ENCODE measurements at regions of chr22 and their contacts with region 1.

Region 1: GRCh38 chr22:38569972-38570778 is at the start of gene DMC1:
- DNase-seq: peak; percentile 69
- ATAC-seq: peak; percentile 94
- H3K4me3 ChIP-seq: peak within 1 kb of the TSS; percentile 99
- H3K27ac ChIP-seq: peak within 1 kb of the TSS; percentile 73; the same call in 1 of the 2 replicates
- H3K4me1 ChIP-seq: no peaks in the 10 kb centered on the region; the same call in 1 of the 2 replicates
- H3K27me3 ChIP-seq: 0 out of 2 replicates have a peak, but pooled peaks cover 2% of the 10 kb centered on the region
- CTCF ChIP-seq: no peak
- POLR2A ChIP-seq: no peak
- RAD21 ChIP-seq: no peak
- total RNA-seq, gene DMC1: 0.18 and 1.1 TPM in 2 replicates

Region 2: DNA sequence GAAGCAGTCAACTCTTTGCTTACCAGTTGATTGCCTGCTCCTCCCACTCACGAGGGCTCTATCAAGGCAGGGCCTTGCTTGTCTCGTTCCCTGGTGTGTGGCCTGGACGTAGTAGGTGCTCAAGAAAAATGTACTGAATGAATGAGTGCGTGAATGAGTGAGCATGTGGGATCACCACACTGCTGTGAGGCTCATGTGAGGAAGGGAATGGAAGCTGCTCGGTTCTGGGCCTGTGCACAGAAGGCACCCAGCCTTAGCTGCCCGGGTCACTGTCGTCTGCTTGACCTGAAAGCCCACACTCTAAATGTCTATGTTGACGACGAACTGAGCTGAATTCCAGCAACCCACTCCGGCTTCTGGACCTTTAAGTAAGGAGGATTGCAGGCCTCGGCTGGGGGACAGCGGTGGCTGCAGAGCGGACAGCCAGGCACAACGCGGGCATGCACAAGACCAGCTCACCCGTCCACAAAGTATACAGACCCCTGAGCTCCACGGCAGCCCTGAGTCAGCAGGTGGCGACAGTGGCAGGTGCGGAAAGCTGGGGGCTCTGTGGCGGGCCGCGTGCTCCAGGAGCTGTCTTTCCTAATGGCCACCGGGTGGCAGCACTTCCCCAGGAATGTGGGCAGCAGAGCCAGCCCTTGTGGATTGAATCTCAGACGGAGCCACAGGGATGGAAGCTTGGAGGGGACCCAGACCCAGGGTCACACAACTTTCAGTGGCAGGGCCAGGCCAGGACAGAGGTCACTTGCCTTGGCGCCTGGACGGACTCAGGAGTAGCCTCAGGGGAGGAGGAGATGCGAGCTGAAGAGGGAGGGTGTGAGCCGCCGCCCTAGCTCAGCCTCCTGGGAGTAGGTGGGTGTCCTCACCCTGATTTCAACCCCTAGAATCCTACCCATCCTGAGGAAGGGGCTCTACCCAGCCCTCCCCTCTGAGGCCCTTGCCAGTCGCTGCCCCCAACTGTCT is 518.0 kb before region 1 on chr22:
- CTCF ChIA-PET with region 1: interaction called, 7 read pairs
- POLR2A ChIA-PET with region 1: no interaction called
- dilution Hi-C with region 1: no loop called
- in situ Hi-C with region 1: loop called (anchors 10 kb)
- intact Hi-C with region 1: loop called (anchors 1 kb)
- DNase-seq: peak; percentile 65
- ATAC-seq: peak; percentile 83
- H3K4me3 ChIP-seq: no peak overlapping the region
- H3K27ac ChIP-seq: no peak overlapping the region
- H3K4me1 ChIP-seq: peaks cover 3% of the 10 kb centered on the region; the same call in 1 of the 2 replicates
- H3K27me3 ChIP-seq: peaks cover 5% of the 10 kb centered on the region; the same call in 1 of the 2 replicates
- CTCF ChIP-seq: peak; percentile 85
- POLR2A ChIP-seq: no peak
- RAD21 ChIP-seq: peak; percentile 89

Region 3: DNA sequence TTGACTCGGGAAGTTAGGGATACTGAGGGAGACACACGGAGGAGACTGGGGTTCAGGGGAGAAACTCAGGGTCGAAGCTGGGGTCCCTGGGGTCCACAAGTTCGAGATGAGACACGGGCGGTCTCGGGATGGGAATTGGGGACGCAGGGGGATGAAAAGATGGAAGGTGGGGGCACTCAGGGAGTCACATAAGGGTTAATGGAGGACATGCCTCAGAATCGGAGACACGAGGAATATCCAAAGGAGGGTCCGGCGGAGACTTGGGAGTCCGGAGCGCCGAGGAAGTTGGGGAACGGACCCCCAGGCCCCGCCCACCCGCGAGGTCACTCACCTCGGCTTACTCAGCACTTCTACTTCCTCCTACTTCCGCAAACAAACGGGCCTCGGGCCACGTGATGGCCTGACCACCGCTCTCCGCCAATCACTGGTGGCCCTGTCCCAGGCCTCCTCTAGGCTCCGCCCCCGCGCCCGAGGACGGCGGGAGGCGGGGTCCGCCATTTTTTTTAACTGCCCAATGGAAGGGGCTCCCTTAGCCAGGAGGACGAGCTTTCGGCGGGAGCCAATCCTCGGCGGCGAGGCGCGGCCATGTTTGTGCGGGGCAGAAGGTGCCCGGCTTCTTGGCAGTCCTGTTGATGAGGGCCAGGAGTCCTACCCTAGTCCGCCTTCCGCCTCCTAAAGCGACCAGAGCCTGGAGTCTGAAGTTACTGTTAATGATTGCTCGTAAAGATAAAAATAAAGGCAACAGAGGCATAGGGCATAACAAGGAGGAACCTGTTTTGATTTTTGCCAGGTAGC is 388.5 kb before region 1 on chr22 and contains the start of gene PLA2G6:
- CTCF ChIA-PET with region 1: no interaction called
- POLR2A ChIA-PET with region 1: no interaction called
- dilution Hi-C with region 1: no loop called
- in situ Hi-C with region 1: no loop called
- intact Hi-C with region 1: no loop called
- DNase-seq: peak; percentile 98
- ATAC-seq: peak; percentile 95
- H3K4me3 ChIP-seq: peak within 1 kb of the TSS; percentile 50
- H3K27ac ChIP-seq: peak within 1 kb of the TSS; percentile 87
- H3K4me1 ChIP-seq: peaks cover 22% of the 10 kb centered on the region
- H3K27me3 ChIP-seq: no peaks in the 10 kb centered on the region
- CTCF ChIP-seq: no peak
- POLR2A ChIP-seq: 0 out of 2 replicates have a peak, but pooled peaks have one; percentile 37
- RAD21 ChIP-seq: no peak
- total RNA-seq, gene PLA2G6: 3.9 and 6.1 TPM in 2 replicates

Region 4: DNA sequence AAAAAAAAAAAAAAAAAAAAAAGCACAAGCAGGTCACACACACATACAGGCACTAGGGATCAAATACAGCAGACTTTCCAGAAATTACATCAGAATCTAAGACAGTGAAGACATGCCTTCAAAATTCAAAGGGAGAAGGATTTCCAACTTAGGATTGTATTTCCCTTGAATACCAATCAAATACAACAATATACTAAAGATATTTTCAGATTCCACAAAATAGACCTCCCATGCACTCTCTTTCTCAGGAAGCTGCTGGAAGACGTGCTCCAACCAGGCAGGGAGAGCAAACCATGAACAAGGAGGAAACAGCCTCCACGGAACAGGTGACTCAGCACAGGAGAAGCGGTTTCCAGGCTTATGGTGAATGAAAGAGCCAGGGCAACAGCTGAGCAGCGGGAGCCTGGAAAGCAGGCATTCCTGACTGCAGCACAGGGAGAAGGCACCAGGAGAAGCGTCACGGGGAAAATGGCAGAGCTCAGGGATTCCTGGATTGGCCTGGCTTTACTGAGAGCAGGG is 329.4 kb before region 1 on chr22:
- CTCF ChIA-PET with region 1: no interaction called
- POLR2A ChIA-PET with region 1: no interaction called
- dilution Hi-C with region 1: no loop called
- in situ Hi-C with region 1: no loop called
- intact Hi-C with region 1: loop called (anchors 5 kb)
- DNase-seq: peak; percentile 91
- ATAC-seq: peak; percentile 19
- H3K4me3 ChIP-seq: no peak overlapping the region
- H3K27ac ChIP-seq: peak overlapping the region; percentile 64
- H3K4me1 ChIP-seq: peaks cover 38% of the 10 kb centered on the region
- H3K27me3 ChIP-seq: no peaks in the 10 kb centered on the region
- CTCF ChIP-seq: no peak
- POLR2A ChIP-seq: no peak; the same call in 1 of the 2 replicates
- RAD21 ChIP-seq: peak; percentile 28; the same call in 1 of the 2 replicates

Region 5: DNA sequence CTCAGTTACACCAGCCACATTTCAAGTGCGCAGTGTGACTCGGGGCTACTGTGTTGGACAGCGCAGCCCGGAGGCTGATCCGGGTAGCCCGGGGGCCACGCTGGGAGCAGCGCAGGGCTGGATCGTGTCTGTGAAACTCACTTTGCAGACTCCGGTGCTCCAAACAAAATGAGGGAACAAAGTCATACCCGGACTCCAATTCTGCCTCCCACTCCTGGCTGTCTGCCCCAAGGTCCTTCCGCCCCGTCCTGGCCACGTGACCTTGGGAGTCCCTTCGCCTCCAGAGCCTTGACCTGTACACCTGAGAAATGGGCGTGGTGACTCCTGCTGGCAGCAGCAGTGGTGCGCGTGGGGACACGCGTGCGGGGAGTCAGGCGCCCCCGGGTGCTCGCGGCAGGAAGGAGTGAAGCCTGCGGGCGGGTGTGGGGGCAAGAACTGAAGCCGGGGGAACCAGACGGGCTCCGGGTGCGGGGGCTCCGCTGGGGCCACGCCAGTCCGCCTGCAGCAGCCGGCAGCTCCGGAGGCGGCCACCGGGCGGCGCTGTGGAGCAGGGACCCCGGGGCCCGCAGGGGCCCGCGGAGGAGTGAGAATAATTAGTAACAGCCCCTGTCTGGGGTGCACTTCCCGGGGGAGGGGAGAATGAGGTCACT is 157.6 kb before region 1 on chr22:
- CTCF ChIA-PET with region 1: interaction called, 5 read pairs
- POLR2A ChIA-PET with region 1: no interaction called
- dilution Hi-C with region 1: no loop called
- in situ Hi-C with region 1: no loop called
- intact Hi-C with region 1: loop called (anchors 10 kb)
- DNase-seq: no peak
- ATAC-seq: peak; percentile 49; the same call in 1 of the 2 replicates
- H3K4me3 ChIP-seq: no peak overlapping the region
- H3K27ac ChIP-seq: no peak overlapping the region
- H3K4me1 ChIP-seq: no peaks in the 10 kb centered on the region; the same call in 1 of the 2 replicates
- H3K27me3 ChIP-seq: peaks cover 17% of the 10 kb centered on the region
- CTCF ChIP-seq: peak; percentile 59
- POLR2A ChIP-seq: no peak
- RAD21 ChIP-seq: peak; percentile 36

Region 6: DNA sequence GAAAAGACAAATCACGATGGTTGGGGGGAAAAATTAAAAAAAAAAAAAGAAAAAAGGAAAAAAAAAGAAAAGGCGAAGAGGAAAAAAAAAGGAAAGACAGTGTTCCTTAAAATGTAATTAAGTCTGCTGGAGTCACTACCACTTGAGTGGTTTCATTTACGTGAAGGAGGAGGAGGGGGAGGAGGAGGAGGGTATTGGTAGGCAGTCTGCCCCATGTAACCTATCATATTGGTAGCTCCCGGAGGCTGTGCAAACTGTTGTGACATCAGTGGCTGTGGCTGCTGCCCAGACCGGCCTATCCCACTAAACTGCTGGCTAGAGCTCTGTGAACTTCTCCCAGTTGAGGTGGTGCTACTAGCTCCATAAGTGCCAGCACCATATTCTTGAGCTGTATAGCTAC is 84.4 kb before region 1 on chr22:
- CTCF ChIA-PET with region 1: no interaction called
- POLR2A ChIA-PET with region 1: no interaction called
- dilution Hi-C with region 1: no loop called
- in situ Hi-C with region 1: no loop called
- intact Hi-C with region 1: no loop called
- DNase-seq: no peak
- ATAC-seq: no peak; the same call in 1 of the 2 replicates
- H3K4me3 ChIP-seq: no peak overlapping the region
- H3K27ac ChIP-seq: no peak overlapping the region
- H3K4me1 ChIP-seq: peaks cover 22% of the 10 kb centered on the region
- H3K27me3 ChIP-seq: no peaks in the 10 kb centered on the region
- CTCF ChIP-seq: no peak
- POLR2A ChIP-seq: no peak
- RAD21 ChIP-seq: no peak

Region 7: GRCh38 chr22:38504731-38505540 is 65.2 kb before region 1 on chr22:
- CTCF ChIA-PET with region 1: no interaction called
- POLR2A ChIA-PET with region 1: no interaction called
- dilution Hi-C with region 1: no loop called
- in situ Hi-C with region 1: no loop called
- intact Hi-C with region 1: loop called (anchors 5 kb)
- DNase-seq: peak; percentile 48
- ATAC-seq: no peak
- H3K4me3 ChIP-seq: peak overlapping the region; percentile 70
- H3K27ac ChIP-seq: peak overlapping the region; percentile 94
- H3K4me1 ChIP-seq: peaks cover 7% of the 10 kb centered on the region
- H3K27me3 ChIP-seq: no peaks in the 10 kb centered on the region
- CTCF ChIP-seq: no peak
- POLR2A ChIP-seq: no peak
- RAD21 ChIP-seq: no peak

Region 8: DNA sequence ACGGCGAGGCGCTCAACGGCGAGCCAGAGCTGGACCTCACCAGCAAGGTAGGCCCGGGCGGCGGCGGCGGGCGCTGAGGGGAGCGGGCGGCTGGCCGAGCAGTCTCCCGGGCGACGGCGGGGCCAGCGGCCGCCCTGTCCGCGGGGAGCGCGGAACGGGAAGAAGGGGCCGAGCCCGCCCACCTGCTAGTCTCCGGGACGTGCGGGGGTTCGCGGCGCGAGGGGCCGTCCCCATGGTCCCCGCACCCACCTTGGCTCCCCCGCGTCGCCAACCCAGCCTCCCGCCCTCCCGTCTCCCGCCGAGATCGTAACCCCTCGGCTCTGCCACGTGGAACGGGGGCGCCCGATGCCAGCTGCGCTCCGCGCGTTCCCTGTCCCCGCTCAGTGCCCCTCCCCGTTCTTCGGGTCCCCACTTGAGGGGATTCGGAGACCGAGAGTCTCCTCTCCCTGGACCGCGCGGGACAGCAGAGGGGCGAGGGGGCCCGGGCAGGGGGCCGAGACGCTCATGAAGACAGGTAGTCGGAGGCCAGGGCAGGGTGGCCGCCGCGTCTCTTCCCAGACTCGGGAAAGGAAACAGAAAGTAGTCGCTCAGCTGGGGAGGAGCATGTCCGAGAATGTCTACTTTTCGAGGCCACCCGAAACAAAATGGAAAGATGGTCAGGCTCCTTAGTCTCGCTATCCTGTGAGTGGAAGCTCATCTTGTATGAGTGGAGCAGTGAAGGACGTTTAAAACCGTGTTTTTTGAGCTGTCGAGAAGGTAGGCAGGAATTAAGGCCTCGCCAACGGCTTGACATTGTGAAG is 136.1 kb after region 1 on chr22:
- CTCF ChIA-PET with region 1: no interaction called
- POLR2A ChIA-PET with region 1: no interaction called
- dilution Hi-C with region 1: no loop called
- in situ Hi-C with region 1: no loop called
- intact Hi-C with region 1: no loop called
- DNase-seq: peak; percentile 27
- ATAC-seq: peak; percentile 15
- H3K4me3 ChIP-seq: peak overlapping the region; percentile 69
- H3K27ac ChIP-seq: peak overlapping the region; percentile 72
- H3K4me1 ChIP-seq: peaks cover 7% of the 10 kb centered on the region
- H3K27me3 ChIP-seq: no peaks in the 10 kb centered on the region
- CTCF ChIP-seq: no peak
- POLR2A ChIP-seq: no peak
- RAD21 ChIP-seq: no peak

Region 9: GRCh38 chr22:39773976-39774539 is 1203.9 kb after region 1 on chr22:
- CTCF ChIA-PET with region 1: no interaction called
- POLR2A ChIA-PET with region 1: no interaction called
- dilution Hi-C with region 1: no loop called
- in situ Hi-C with region 1: no loop called
- intact Hi-C with region 1: no loop called
- DNase-seq: peak; percentile 0
- ATAC-seq: no peak
- H3K4me3 ChIP-seq: no peak overlapping the region
- H3K27ac ChIP-seq: no peak overlapping the region
- H3K4me1 ChIP-seq: no peaks in the 10 kb centered on the region
- H3K27me3 ChIP-seq: peaks cover 42% of the 10 kb centered on the region
- CTCF ChIP-seq: no peak
- POLR2A ChIP-seq: no peak
- RAD21 ChIP-seq: no peak

Measured in IMR-90 (cell line).